Heart right ventricle (tissue), 16 donors: ENCODE measurements at regions of chr3 and their contacts with region 1.

Region 1: DNA sequence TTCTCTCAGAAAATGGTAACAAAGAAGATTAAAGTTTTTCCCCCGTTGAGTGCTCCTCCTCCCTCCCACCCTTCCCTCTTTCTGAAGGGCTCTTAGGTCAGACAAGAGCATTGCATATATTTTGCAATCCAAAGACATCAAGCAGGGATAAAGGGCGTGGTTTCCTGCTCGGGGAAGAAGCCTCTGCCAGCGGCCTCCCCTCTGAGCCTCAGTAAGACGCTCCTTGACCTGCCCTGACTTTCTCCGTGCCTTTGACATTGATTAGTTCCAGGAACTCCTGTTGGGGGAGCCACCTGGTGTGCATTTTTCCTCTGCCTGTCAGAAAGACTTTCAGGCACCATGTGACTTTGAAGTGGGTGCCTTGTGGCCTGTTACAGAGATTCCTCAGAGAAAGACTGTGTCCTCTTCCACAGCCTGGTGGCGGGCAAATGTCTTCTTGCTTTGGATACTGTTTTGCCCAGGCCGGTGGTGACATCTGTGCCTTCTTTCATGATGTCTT is 87.2 kb upstream of the TBL1XR1 start:
- DNase-seq: peak; percentile 20 to 26
- ATAC-seq: peak in 6 of 8 donors; percentile 33 to 85 (median 42)
- H3K4me3 ChIP-seq: no peak overlapping the region
- H3K27ac ChIP-seq: peak overlapping the region in 1 of 10 donors; percentile 42
- H3K4me1 ChIP-seq: peaks cover 0 to 31% (median 3%) of the 10 kb centered on the region in 9 donors
- H3K27me3 ChIP-seq: no peaks in the 10 kb centered on the region
- CTCF ChIP-seq: peak in 1 of 9 donors; percentile 9

Region 2: DNA sequence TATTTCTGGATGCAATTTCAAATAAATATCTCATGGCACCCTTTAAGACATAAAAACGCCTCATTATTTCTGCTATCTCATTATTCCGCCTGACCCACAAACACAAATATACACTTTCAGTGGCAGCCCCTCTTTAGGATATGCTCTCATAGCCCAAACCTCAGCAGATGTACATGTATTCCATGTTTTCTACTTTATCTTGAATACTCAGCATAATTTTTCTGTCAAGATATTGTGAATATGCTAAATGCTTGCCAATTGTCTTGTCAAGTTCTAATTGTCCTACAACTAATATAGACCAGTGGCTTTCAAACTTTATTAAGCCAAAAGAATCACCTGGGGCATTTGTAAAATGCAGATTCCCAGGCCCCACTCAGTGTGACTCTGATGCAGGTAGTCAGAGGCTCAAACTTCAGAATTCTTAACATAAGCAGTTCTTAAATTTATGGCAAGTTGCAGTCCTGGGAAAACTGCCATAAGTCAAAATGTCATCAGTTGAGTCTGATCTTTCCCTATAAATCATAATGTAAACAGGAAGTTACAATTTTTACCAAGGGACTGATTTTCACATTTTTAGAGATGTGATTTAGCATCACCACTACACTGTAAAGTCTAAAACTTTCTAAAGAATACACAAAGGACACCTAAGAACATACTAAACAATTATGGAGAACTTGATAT is 222.2 kb before region 1 on chr3:
- intact Hi-C with region 1: no loop called
- DNase-seq: no peak
- ATAC-seq: no peak
- H3K4me3 ChIP-seq: no peak overlapping the region
- H3K27ac ChIP-seq: peak overlapping the region in 1 of 10 donors; percentile 1
- H3K4me1 ChIP-seq: peaks cover 2 to 86% (median 55%) of the 10 kb centered on the region in 9 donors
- H3K27me3 ChIP-seq: no peaks in the 10 kb centered on the region
- CTCF ChIP-seq: no peak

Region 3: GRCh38 chr3:177220136-177220974 is 64.1 kb before region 1 on chr3:
- intact Hi-C with region 1: loop called in 2 of 10 experiments (anchors 10 kb)
- DNase-seq: no peak
- ATAC-seq: no peak
- H3K4me3 ChIP-seq: no peak overlapping the region
- H3K27ac ChIP-seq: no peak overlapping the region
- H3K4me1 ChIP-seq: peaks cover 0 to 12% (median 0%) of the 10 kb centered on the region in 9 donors
- H3K27me3 ChIP-seq: no peaks in the 10 kb centered on the region
- CTCF ChIP-seq: no peak